ENCODE measurements at regions of chr3 and their contacts with region 1.

Region 1: GRCh38 chr3:184135149-184135910 is at the start of gene EIF2B5:
- DNase-seq: peak; percentile 80
- ATAC-seq: peak; percentile 90
- H3K4me3 Mint-ChIP-seq: peak within 1 kb of the TSS; percentile 98
- H3K27ac Mint-ChIP-seq: peak within 1 kb of the TSS; percentile 96
- H3K4me1 Mint-ChIP-seq: peaks cover 33% of the 10 kb centered on the region
- H3K27me3 Mint-ChIP-seq: no peaks in the 10 kb centered on the region
- CTCF ChIP-seq: no peak
- total RNA-seq, gene EIF2B5: 72.0 and 74.2 TPM in 2 replicates

Region 2: GRCh38 chr3:183884427-183885296 is 250.7 kb before region 1 on chr3 and contains the start of gene PARL:
- CTCF ChIA-PET with region 1: interaction called, 5 read pairs
- POLR2A ChIA-PET with region 1: interaction called, 11 read pairs
- intact Hi-C with region 1: no loop called
- DNase-seq: peak; percentile 94
- ATAC-seq: peak; percentile 99
- H3K4me3 Mint-ChIP-seq: peak within 1 kb of the TSS; percentile 98
- H3K27ac Mint-ChIP-seq: peak within 1 kb of the TSS; percentile 85
- H3K4me1 Mint-ChIP-seq: peaks cover 36% of the 10 kb centered on the region
- H3K27me3 Mint-ChIP-seq: peaks cover 2% of the 10 kb centered on the region
- CTCF ChIP-seq: no peak
- total RNA-seq, gene PARL: 57.6 and 57.8 TPM in 2 replicates

Region 3: DNA sequence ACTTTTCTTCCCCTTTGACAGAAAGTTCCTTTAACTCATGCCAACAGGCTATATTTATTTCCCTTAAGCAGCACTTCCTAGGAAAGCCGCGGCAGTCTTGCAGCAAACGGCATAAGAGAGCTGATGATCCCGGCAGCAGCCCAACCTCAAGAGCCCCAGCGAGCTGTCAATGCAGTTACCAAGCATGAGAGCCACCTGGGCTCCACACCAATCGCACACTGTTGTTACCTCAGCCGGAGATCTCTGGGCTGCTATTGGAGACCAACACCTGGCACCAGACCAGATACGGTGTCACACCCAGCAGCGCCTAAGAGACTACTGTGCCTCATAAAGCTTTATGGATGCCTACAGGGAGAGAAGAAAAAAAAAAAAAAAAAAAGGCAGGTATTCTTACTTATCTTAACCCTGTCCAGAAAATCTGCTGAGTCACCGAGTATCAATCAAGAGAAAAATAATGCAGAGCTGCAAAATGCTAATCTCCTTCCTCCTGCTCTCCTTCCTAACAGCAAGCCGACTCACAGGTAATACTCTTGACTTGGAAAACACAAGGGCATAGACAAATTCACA is 129.3 kb before region 1 on chr3:
- CTCF ChIA-PET with region 1: no interaction called
- POLR2A ChIA-PET with region 1: interaction called, 8 read pairs
- intact Hi-C with region 1: loop called (anchors 2 kb)
- DNase-seq: peak; percentile 25
- ATAC-seq: peak; percentile 87
- H3K4me3 Mint-ChIP-seq: peak overlapping the region; percentile 36
- H3K27ac Mint-ChIP-seq: peak overlapping the region; percentile 67
- H3K4me1 Mint-ChIP-seq: peaks cover 33% of the 10 kb centered on the region
- H3K27me3 Mint-ChIP-seq: no peaks in the 10 kb centered on the region
- CTCF ChIP-seq: no peak

Region 4: GRCh38 chr3:184154885-184155643 is 19.7 kb after region 1 on chr3 and contains the start of gene DVL3:
- CTCF ChIA-PET with region 1: no interaction called
- POLR2A ChIA-PET with region 1: interaction called, 10 read pairs
- intact Hi-C with region 1: loop called (anchors 1 kb)
- DNase-seq: peak; percentile 70
- ATAC-seq: peak; percentile 80
- H3K4me3 Mint-ChIP-seq: peak within 1 kb of the TSS; percentile 91
- H3K27ac Mint-ChIP-seq: peak within 1 kb of the TSS; percentile 77
- H3K4me1 Mint-ChIP-seq: peaks cover 25% of the 10 kb centered on the region
- H3K27me3 Mint-ChIP-seq: no peaks in the 10 kb centered on the region
- CTCF ChIP-seq: no peak
- total RNA-seq, gene DVL3: 52.1 and 54.2 TPM in 2 replicates

Region 5: DNA sequence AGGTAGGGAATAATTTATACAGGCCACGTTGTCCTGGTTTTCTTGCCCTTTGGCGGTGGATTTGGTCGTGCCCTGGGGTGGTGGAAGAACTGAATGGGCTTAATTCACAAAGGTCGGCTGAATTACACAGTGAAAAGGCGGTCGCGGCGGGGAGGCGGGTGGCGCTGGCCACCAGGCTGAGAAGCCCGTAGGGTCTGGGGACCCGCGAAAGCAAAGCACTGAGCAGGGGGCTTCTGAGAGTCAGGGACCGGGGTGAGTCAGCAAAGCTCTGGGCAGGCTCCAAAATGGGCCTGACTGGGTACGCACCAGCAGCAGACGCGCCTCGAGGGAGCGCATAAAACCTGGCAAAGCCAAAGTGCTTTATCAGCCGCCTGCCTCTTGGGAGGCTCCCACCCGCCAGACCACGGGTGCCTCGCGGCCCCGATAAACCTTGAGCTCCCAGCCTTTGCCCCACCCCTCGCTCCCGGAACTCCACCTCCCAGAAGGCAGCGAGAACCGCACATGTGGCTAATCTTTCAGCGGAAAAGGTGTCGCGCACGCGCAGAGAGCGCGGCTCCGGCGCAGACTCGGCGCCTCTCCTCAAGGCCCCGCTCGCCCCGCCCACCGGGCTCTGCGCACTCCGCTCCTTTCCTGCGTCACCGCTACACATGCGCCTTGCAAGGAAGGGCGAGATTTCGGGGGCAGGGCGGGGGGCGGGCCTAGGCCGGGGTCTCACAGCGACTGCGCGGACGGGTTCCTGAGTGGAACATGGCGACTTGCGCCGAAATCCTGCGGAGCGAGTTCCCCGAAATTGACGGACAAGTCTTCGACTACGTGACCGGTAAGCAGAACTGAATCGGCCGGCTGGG is 50.4 kb after region 1 on chr3 and contains the start of gene ABCF3:
- CTCF ChIA-PET with region 1: no interaction called
- POLR2A ChIA-PET with region 1: interaction called, 14 read pairs
- intact Hi-C with region 1: loop called (anchors 1 kb)
- DNase-seq: peak; percentile 99
- ATAC-seq: peak; percentile 95
- H3K4me3 Mint-ChIP-seq: peak within 1 kb of the TSS; percentile 99
- H3K27ac Mint-ChIP-seq: peak within 1 kb of the TSS; percentile 93
- H3K4me1 Mint-ChIP-seq: peaks cover 40% of the 10 kb centered on the region
- H3K27me3 Mint-ChIP-seq: no peaks in the 10 kb centered on the region
- CTCF ChIP-seq: no peak
- total RNA-seq, gene ABCF3: 78.0 and 86.7 TPM in 2 replicates

Region 6: GRCh38 chr3:184314363-184314699 is 179.0 kb after region 1 on chr3 and contains the start of gene EIF4G1:
- CTCF ChIA-PET with region 1: no interaction called
- POLR2A ChIA-PET with region 1: no interaction called
- intact Hi-C with region 1: loop called (anchors 2 kb)
- DNase-seq: peak; percentile 92
- ATAC-seq: peak; percentile 86
- H3K4me3 Mint-ChIP-seq: peak within 1 kb of the TSS; percentile 86
- H3K27ac Mint-ChIP-seq: peak within 1 kb of the TSS; percentile 88
- H3K4me1 Mint-ChIP-seq: peaks cover 28% of the 10 kb centered on the region
- H3K27me3 Mint-ChIP-seq: no peaks in the 10 kb centered on the region
- CTCF ChIP-seq: no peak
- total RNA-seq, gene EIF4G1: 292 and 319 TPM in 2 replicates

Measured in activated B cell treated with CpG ODN at 0.5 μM for 24 hours (primary cell).